Posterior cingulate gyrus (tissue), 11 donors: ENCODE measurements at regions of chr10 and their contacts with region 1.

Region 1: DNA sequence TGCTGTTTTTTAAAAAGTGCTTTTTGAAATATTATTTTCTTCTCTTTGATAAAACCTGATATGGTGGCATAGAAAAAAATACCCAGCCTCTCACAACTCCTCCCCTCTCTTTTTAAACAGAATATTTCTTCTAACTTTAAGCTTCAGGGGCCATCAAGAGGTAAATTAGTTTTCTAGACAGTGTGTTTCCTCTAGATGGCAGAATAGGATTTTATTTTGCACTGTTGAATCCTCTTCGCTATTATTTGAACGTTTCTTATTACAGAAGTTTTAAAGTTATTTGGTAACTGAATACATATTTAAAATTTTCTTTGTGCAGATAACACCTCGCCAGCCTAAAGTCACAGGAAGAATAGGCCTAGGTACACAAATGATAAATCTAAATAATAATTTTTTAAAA is 30.3 kb downstream of the ARL5B start:
- DNase-seq: no peak

Region 2: DNA sequence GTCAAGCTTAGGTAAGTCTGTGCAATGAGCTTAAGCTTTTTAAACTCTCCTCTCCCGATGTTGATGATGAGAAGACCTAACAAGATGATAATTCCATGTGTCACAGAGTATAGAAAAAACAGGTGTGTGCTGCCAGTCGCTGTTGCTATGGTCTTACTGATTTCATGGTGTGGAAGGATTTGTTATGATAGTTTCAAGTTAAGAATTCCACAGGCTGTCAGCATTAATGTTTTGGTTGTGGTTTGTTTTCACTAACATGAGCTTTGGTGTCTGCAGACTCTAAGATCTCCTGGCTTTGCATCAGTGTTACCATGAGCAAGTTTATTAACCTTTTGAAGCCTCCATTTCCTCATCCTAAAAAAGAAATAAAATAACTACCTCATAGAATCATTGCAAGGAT is 161.8 kb before region 1 on chr10:
- intact Hi-C with region 1: no loop called
- DNase-seq: no peak

Region 3: DNA sequence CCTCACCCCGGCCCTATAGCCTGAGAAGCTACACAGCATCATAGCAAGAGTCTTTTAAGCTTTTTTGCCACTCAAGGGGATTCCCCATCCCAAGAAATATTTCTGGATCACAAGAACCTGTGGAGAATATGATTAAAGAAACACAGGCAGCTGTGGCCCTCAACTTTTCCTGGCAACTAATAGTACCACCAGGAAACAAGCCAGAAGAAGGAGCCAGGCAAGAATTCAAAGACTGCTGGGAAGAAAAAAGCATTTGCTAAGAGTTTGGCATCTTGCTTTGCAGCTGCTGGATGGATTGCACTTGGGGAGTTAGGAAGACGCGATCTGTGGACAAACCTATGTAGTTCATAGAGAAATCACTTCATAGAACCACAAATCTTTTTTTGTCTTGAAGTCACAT is 1564.6 kb after region 1 on chr10:
- intact Hi-C with region 1: loop called (anchors 10 kb)
- DNase-seq: no peak

Region 4: DNA sequence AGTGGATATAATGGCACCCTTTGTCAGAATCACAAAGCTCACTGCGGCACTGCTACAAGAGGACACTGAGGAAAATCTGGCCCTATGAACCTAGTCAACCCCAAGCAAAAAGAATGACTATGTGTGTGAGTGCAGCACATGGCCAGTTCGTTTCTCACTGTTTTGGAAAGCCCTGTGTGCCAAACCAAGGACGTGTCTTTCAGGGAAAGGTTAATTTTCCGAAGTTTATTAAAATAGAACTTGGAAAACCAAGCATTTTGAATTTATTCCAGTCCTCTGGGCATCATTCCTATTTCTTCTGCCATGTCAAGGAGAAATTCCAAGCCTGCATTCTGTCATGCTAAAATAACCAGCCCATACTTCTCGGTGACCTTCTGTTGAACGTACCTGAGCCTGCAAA is 1598.6 kb after region 1 on chr10:
- intact Hi-C with region 1: no loop called
- DNase-seq: peak in 4 of 10 donors; percentile 16 to 71 (median 34)